Mammary epithelial cell (primary cell): ENCODE measurements at regions of chr22 and their contacts with region 1.

Region 1: DNA sequence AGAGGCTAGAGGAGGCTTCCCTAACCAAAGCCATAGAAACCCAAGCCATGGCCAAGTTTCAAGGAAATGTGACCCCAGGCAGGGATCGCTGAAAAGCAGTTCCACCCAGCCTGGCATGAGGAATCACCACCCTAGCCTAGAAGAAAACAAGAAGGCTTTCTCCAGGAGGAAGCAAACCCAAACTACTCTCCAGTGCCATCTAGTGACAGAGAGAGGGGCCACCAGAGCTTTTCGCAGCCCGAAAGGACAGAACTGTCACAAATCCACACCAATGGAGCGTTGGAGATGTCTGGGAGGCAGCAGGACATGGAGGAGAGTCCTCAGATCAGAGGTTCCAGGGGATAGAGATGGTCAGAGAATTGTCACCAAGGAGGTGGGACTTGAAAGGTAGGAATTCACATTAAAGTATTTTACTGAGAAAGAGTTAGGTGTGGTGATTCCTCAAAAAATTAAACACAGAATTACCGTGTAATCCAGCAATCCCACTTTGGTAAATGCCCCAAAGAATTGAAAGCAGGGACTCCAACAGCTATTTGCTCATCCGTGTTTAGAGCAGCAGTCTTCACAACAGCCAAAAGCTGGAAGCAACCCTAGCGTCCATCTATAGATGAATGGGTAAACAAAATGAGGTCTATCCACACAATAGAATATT is 67.3 kb upstream of the NUP50 start:
- DNase-seq: peak; percentile 54
- H3K4me3 ChIP-seq: no peak overlapping the region
- H3K27ac ChIP-seq: no peak overlapping the region
- H3K4me1 ChIP-seq: no peaks in the 10 kb centered on the region
- H3K27me3 ChIP-seq: no peaks in the 10 kb centered on the region
- CTCF ChIP-seq: peak; percentile 91 to 96

Region 2: GRCh38 chr22:44697423-44698141 is 398.8 kb before region 1 on chr22:
- CTCF ChIA-PET with region 1: no interaction called
- dilution Hi-C with region 1: no loop called
- in situ Hi-C with region 1: no loop called
- intact Hi-C with region 1: loop called (anchors 2 kb)
- DNase-seq: peak; percentile 52
- H3K4me3 ChIP-seq: no peak overlapping the region
- H3K27ac ChIP-seq: no peak overlapping the region
- H3K4me1 ChIP-seq: peaks cover 9% of the 10 kb centered on the region
- H3K27me3 ChIP-seq: no peaks in the 10 kb centered on the region
- CTCF ChIP-seq: peak; percentile 93 to 95

Region 3: DNA sequence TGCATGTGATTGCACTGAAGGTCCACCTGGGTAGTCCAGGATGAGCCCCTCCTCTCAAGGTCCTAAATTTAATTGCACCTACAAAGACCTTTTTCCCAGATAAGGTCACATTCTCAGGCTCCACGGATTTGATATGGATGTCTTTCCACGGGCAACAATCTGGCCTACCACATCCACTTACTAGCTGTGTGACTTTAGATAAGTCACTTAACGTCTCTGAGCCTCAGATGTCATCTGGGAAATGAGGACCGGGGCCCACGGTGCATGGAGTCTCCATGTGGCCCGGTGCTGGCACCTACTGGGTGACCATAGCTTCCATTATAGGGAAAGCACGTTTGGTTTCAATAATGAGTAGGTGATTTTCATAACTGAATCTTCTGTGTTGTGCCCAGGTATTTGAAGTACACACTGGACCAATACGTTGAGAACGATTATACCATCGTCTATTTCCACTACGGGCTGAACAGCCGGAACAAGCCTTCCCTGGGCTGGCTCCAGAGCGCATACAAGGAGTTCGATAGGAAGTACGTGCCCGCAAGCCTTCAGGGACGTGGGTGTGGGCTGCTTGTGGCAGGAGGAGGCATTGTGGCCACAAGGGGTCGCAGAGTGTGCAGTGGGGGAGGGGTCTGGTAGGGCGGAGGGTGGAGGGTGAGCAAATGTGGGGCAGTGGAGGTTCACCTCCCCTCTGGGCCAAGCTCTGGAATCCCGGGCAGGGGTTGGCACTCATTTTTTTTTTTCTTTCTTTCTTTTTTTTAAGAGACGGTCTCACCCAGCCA is 288.3 kb before region 1 on chr22:
- CTCF ChIA-PET with region 1: no interaction called
- dilution Hi-C with region 1: no loop called
- in situ Hi-C with region 1: loop called in 1 of 2 experiments (anchors 25 kb)
- intact Hi-C with region 1: no loop called
- DNase-seq: no peak
- H3K4me3 ChIP-seq: no peak overlapping the region
- H3K27ac ChIP-seq: no peak overlapping the region
- H3K4me1 ChIP-seq: no peaks in the 10 kb centered on the region
- H3K27me3 ChIP-seq: no peaks in the 10 kb centered on the region
- CTCF ChIP-seq: peak in 1 of 2 donors; percentile 9

Region 4: DNA sequence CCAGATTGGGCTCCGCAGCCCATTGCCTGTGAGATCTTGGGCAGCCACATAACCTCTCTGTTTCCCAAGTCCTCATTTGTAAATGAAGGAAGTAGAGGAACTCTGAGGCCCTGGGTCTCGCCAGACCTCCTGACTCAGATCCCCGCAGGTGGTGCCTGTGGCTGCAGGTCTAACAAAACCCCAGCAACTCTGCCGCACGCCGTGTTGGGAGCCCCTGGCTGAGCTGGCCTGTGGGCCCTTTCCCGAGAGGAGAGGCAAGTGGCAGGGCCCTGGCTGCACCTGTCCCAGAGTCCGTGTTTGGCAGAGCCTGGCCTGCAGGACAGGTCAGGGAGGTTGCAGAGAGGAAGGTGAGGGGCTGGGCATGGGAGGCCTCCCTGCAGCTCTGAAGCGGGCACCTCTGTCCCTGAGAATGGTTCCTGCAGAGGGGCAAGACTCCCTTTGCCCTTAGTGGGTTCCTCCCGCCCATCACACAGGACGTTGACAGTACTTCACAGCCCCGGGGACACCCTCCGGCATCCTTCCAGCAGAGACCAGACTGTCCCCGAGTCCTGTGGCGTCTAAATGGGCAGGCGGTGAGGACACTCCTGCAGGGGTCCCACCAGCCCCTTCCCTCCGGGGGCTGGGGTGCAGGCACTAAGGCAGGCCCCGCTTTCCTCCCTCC is 276.3 kb before region 1 on chr22:
- CTCF ChIA-PET with region 1: no interaction called
- dilution Hi-C with region 1: no loop called
- in situ Hi-C with region 1: loop called (anchors 10 to 25 kb)
- intact Hi-C with region 1: loop called (anchors 1 kb)
- DNase-seq: no peak
- H3K4me3 ChIP-seq: no peak overlapping the region
- H3K27ac ChIP-seq: no peak overlapping the region
- H3K4me1 ChIP-seq: no peaks in the 10 kb centered on the region
- H3K27me3 ChIP-seq: no peaks in the 10 kb centered on the region
- CTCF ChIP-seq: no peak

Region 5: GRCh38 chr22:44828193-44828592 is 268.2 kb before region 1 on chr22:
- CTCF ChIA-PET with region 1: no interaction called
- dilution Hi-C with region 1: no loop called
- in situ Hi-C with region 1: loop called (anchors 10 to 25 kb)
- intact Hi-C with region 1: no loop called
- DNase-seq: no peak
- H3K4me3 ChIP-seq: no peak overlapping the region
- H3K27ac ChIP-seq: no peak overlapping the region
- H3K4me1 ChIP-seq: no peaks in the 10 kb centered on the region
- H3K27me3 ChIP-seq: no peaks in the 10 kb centered on the region
- CTCF ChIP-seq: peak; percentile 26 to 50

Region 6: GRCh38 chr22:44975427-44976262 is 120.7 kb before region 1 on chr22:
- CTCF ChIA-PET with region 1: no interaction called
- dilution Hi-C with region 1: no loop called
- in situ Hi-C with region 1: no loop called
- intact Hi-C with region 1: loop called (anchors 1 kb)
- DNase-seq: peak; percentile 68
- H3K4me3 ChIP-seq: no peak overlapping the region
- H3K27ac ChIP-seq: no peak overlapping the region
- H3K4me1 ChIP-seq: no peaks in the 10 kb centered on the region
- H3K27me3 ChIP-seq: peaks cover 3% of the 10 kb centered on the region
- CTCF ChIP-seq: peak; percentile 62 to 85

Region 7: DNA sequence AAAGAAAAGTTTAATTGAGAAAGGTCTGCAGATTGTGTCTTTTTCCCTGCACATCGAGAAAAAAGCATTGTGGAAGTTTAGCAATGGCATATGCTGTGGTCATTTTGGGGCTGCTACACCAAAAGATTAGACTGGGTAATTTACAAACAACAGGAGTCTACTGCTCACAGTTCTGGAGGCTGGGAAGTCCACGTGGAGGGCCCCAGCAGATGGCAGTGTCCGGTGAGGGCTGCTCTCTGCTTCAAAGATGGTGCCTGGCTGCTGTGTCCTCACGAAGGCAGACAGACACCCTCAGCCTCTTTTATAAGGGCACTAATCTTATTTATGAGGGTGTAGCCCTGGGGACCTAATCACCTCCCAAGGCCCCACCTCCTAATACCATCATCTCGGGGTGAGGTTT is 107.7 kb before region 1 on chr22:
- CTCF ChIA-PET with region 1: no interaction called
- dilution Hi-C with region 1: no loop called
- in situ Hi-C with region 1: loop called in 1 of 2 experiments (anchors 5 kb)
- intact Hi-C with region 1: no loop called
- DNase-seq: no peak
- H3K4me3 ChIP-seq: no peak overlapping the region
- H3K27ac ChIP-seq: no peak overlapping the region
- H3K4me1 ChIP-seq: no peaks in the 10 kb centered on the region
- H3K27me3 ChIP-seq: peaks cover 1% of the 10 kb centered on the region
- CTCF ChIP-seq: peak; percentile 8 to 33